ENCODE measurements at regions of chr9 and their contacts with region 1.

Region 1: DNA sequence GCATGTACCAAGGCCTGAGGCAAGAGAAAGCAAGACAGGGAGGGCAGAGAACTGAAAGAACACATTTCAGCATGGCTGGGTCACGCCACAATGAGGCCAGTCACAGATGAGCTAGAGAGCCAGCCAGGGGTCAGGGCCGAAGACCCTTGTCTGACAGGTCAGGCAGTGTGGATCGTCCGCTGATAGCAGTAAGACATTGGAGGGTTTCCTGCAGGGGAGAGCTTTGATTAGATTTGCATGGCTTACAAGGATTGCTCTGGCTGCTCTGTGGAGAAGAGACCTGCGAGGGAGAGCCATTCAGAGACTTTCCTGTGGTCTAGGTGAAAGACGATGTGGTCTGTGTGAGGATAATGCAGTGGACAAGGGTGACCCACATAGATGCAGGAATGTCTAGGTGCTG is 93.1 kb downstream of the RALGPS1 start:
- DNase-seq: no peak
- H3K4me3 ChIP-seq: no peak overlapping the region
- H3K27ac ChIP-seq: no peak overlapping the region
- H3K4me1 ChIP-seq: peaks cover 13% of the 10 kb centered on the region
- H3K27me3 ChIP-seq: no peaks in the 10 kb centered on the region
- CTCF ChIP-seq: no peak
- EP300 ChIP-seq: no peak
- POLR2A ChIP-seq: no peak

Region 2: DNA sequence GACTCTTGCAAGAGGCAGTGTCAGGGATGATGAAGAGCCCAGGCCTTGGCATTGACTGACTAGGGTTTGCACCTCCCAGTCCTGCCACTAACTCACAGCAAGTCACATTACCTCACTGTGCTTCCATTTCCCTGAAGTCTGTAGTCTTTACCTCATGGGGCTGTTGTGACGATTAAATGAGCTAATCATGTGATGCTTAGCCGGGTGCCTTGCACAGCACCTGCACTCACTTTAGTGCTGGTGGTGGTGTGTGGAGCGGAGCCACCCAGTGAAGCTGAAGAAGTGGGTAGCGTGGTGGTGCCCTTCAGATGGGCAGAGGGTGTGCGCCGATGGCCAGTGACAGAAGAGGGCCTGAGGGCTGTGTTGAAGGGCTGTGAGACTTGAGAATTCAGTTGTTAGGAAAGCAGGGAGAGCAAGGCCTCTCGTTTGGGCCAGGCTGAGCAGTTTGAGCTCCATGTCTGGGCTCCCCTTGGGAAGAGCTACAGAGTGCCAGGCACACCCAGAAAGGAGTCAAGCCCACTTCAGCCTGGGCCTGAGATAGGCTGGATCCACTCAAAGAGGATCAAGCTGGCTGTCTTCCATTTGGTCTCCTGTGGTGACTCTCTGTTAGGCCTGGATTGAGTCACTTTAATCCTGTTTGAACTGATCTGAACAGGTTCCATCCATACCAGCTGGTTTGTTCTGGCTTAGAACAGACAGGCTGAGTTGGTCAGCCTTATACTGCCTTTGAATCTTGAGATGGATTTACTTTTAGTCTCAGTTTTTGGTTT is 50.5 kb before region 1 on chr9:
- intact Hi-C with region 1: no loop called
- DNase-seq: no peak
- H3K4me3 ChIP-seq: no peak overlapping the region
- H3K27ac ChIP-seq: no peak overlapping the region
- H3K4me1 ChIP-seq: no peaks in the 10 kb centered on the region
- H3K27me3 ChIP-seq: no peaks in the 10 kb centered on the region
- CTCF ChIP-seq: no peak
- EP300 ChIP-seq: no peak
- POLR2A ChIP-seq: no peak

Region 3: GRCh38 chr9:127029548-127029947 is 21.9 kb after region 1 on chr9:
- intact Hi-C with region 1: loop called in 1 of 4 experiments (anchors 1 kb)
- DNase-seq: no peak
- H3K4me3 ChIP-seq: no peak overlapping the region
- H3K27ac ChIP-seq: no peak overlapping the region
- H3K4me1 ChIP-seq: no peaks in the 10 kb centered on the region
- H3K27me3 ChIP-seq: no peaks in the 10 kb centered on the region
- CTCF ChIP-seq: no peak
- EP300 ChIP-seq: no peak
- POLR2A ChIP-seq: no peak

Measured in ovary (tissue), 10 donors.